Mammary epithelial cell (primary cell): ENCODE measurements at regions of chr17 and their contacts with region 1.

Region 1: GRCh38 chr17:50638851-50639767 is 4.4 kb downstream of the ABCC3 start:
- DNase-seq: peak; percentile 97
- H3K4me3 ChIP-seq: peak overlapping the region in 1 of 3 experiments; percentile 14
- H3K27ac ChIP-seq: peak overlapping the region; percentile 55
- H3K4me1 ChIP-seq: peaks cover 82% of the 10 kb centered on the region
- H3K27me3 ChIP-seq: no peaks in the 10 kb centered on the region
- CTCF ChIP-seq: no peak

Region 2: DNA sequence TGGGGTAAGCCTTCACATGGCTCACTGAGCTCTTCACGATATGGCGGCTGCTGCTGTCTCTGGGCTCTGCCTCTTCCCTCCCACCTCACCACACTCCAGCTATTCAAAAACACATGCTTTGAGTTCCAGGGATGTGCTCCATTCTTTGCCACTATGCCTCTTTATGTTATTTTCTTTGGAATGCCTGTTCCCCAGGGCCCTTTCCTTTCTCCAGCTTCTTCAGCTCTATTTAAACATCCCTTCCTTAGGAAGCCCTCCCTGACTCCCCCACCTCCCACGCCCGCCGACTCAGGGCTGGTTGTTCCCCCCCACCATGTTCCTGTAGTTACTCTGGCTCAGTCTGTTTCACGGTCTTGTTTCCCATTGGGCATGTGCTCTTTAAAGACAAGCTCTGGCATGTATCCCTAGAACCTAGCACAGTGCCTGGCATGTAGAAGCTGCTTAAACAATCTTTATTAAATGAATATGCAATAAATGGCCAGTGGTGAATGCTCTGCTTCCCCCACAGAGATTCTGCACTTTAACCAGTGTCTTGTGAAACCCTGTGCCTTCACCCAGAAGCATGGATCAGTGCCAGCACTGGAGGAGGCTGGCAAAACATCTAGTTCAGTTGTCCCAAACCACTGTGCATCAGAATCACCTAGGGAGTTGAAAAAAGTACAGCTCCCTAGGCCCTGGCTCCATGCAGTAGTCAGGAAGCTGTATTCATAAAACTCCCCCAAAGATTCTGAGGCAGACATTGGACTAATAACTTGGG is 124.0 kb before region 1 on chr17:
- CTCF ChIA-PET with region 1: no interaction called
- dilution Hi-C with region 1: loop called (anchors 5 kb)
- in situ Hi-C with region 1: no loop called
- intact Hi-C with region 1: no loop called
- DNase-seq: peak; percentile 60
- H3K4me3 ChIP-seq: no peak overlapping the region
- H3K27ac ChIP-seq: no peak overlapping the region
- H3K4me1 ChIP-seq: peaks cover 63% of the 10 kb centered on the region
- H3K27me3 ChIP-seq: no peaks in the 10 kb centered on the region
- CTCF ChIP-seq: no peak

Region 3: GRCh38 chr17:50547035-50547735 is 91.9 kb before region 1 on chr17 and contains the start of gene SPATA20:
- CTCF ChIA-PET with region 1: interaction called, 17 read pairs
- dilution Hi-C with region 1: loop called (anchors 5 kb)
- in situ Hi-C with region 1: loop called in 1 of 2 experiments (anchors 5 kb)
- intact Hi-C with region 1: no loop called
- DNase-seq: peak; percentile 82
- H3K4me3 ChIP-seq: peak within 1 kb of the TSS; percentile 37 to 56 (median 55)
- H3K27ac ChIP-seq: peak within 1 kb of the TSS; percentile 23
- H3K4me1 ChIP-seq: peaks cover 21% of the 10 kb centered on the region
- H3K27me3 ChIP-seq: no peaks in the 10 kb centered on the region
- CTCF ChIP-seq: peak; percentile 95 to 99
- total RNA-seq, gene SPATA20: 65.6 to 79.9 TPM

Region 4: GRCh38 chr17:50668025-50668837 is 29.1 kb after region 1 on chr17:
- CTCF ChIA-PET with region 1: interaction called, 7 read pairs
- dilution Hi-C with region 1: no loop called
- in situ Hi-C with region 1: no loop called
- intact Hi-C with region 1: loop called (anchors 5 kb)
- DNase-seq: no peak
- H3K4me3 ChIP-seq: no peak overlapping the region
- H3K27ac ChIP-seq: no peak overlapping the region
- H3K4me1 ChIP-seq: peaks cover 34% of the 10 kb centered on the region
- H3K27me3 ChIP-seq: no peaks in the 10 kb centered on the region
- CTCF ChIP-seq: no peak

Region 5: GRCh38 chr17:50699410-50700074 is 60.4 kb after region 1 on chr17:
- CTCF ChIA-PET with region 1: no interaction called
- dilution Hi-C with region 1: loop called (anchors 5 kb)
- in situ Hi-C with region 1: loop called in 1 of 2 experiments (anchors 10 kb)
- intact Hi-C with region 1: loop called (anchors 1 kb)
- DNase-seq: no peak
- H3K4me3 ChIP-seq: no peak overlapping the region
- H3K27ac ChIP-seq: no peak overlapping the region
- H3K4me1 ChIP-seq: peaks cover 8% of the 10 kb centered on the region
- H3K27me3 ChIP-seq: no peaks in the 10 kb centered on the region
- CTCF ChIP-seq: no peak

Region 6: DNA sequence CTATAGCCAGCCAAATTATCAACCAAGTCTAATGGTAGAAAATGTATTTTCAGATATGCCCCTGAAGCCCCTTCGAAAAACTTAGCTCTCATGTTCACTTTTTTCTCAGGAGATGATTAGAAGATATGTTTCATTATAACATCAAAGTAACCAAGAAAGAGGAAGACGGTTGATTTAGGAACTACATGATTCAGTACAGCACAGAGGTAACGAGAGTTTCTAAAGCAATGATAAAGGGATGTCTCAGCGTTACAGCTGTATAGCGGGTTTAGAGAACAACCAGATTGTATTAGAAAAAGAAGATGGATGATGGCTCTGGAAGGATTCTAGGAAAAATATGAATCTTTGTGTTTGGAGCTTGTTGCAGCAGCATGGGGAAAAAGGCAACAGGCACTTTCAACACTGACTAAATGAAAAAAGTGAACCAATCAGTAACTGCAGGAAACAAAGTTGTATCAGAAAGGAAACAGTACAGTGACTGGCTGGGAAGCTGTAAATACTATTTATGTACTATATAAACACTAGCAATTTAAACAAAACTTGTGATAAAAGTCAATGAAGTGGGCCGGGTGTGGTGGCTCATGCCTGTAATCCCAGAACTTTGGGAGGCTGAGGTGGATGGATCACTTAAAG is 599.3 kb after region 1 on chr17:
- CTCF ChIA-PET with region 1: no interaction called
- dilution Hi-C with region 1: no loop called
- in situ Hi-C with region 1: no loop called
- intact Hi-C with region 1: no loop called
- DNase-seq: no peak
- H3K4me3 ChIP-seq: no peak overlapping the region
- H3K27ac ChIP-seq: no peak overlapping the region
- H3K4me1 ChIP-seq: no peaks in the 10 kb centered on the region
- H3K27me3 ChIP-seq: no peaks in the 10 kb centered on the region
- CTCF ChIP-seq: no peak